AG04449 (cell line): ENCODE measurements at regions of chrX and their contacts with region 1.

Region 1: GRCh38 chrX:51860679-51861078 is 32.7 kb upstream of the MAGED1 start:
- DNase-seq: no peak
- H3K4me3 ChIP-seq: no peak overlapping the region
- CTCF ChIP-seq: peak; percentile 32

Region 2: GRCh38 chrX:51641421-51642021 is 219.2 kb before region 1 on chrX:
- CTCF ChIA-PET with region 1: interaction called, 16 read pairs
- POLR2A ChIA-PET with region 1: no interaction called
- DNase-seq: peak; percentile 9
- H3K4me3 ChIP-seq: no peak overlapping the region
- CTCF ChIP-seq: no peak